BJ (cell line): ENCODE measurements at regions of chr16 and their contacts with region 1.

Region 1: DNA sequence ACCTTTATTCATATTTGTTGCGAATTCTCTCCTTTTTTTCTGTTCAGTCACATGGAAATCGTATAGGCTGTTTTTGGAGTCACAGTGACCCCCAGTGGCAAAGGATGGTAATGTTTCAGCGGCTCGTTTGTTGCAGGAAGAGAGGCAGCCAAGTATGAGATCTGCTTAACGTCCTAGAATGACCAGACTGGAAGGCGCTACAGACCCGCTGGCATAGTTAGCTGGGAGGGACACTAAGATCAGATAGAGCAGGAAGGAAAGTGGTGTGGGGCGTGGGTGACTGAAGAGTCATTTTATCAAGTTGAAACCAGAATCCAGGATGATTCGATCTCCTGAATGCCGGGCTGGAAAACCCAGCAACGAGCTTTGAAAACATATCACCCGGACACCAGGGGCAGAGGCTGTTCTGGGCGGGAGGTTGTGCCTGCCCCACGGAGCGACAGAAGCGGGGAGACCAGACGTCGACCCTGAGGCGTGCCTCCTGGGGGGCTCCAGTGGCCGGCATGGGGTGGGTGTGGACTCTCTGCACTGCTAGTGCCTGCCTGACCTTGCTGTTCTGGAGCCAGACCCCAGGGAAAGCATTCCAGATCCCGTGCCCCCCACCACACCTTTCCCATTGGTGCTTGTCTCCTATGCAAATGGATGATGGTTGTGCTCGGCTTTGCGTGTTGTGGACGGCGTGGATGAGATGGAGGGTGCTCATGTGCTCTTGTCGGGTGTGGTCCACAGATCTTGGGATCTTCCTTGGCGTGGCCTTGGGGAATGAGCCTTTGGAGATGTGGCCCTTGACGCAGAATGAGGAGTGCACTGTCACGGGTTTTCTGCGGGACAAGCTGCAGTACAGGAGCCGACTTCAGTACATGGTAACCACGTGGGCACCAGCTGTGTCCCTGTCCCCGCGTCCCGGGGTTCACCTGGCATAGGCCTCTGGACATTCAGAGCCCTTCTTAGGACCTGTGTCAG is 7.7 kb downstream of the IL34 start:
- DNase-seq: peak; percentile 48
- H3K4me3 ChIP-seq: peak overlapping the region; percentile 17; the same call in 1 of the 2 replicates
- H3K27me3 ChIP-seq: no peaks in the 10 kb centered on the region
- CTCF ChIP-seq: peak; percentile 75

Region 2: GRCh38 chr16:70331588-70332358 is 322.3 kb before region 1 on chr16:
- CTCF ChIA-PET with region 1: interaction called, 18 read pairs
- POLR2A ChIA-PET with region 1: no interaction called
- DNase-seq: no peak
- H3K4me3 ChIP-seq: no peak overlapping the region
- H3K27me3 ChIP-seq: no peaks in the 10 kb centered on the region
- CTCF ChIP-seq: peak; percentile 59

Region 3: DNA sequence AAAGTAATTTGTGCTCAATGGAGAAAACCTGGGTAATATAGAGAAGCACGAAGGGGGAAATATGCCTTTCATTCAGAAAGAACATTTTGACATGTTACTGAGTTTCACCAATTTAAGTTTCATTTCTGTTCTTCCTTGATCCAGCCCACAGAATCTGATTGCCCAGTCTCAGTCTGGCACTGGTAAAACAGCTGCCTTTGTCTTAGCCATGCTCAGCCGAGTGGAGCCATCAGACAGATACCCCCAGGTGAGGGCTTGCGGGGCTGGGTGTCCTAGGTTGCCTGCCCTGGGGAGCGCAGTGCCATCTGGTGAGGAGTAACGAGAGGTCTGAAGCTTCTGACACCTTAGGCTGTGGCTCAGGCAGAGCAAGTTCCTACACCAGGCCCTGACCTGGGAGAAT is 289.7 kb before region 1 on chr16:
- CTCF ChIA-PET with region 1: interaction called, 22 read pairs
- POLR2A ChIA-PET with region 1: no interaction called
- DNase-seq: no peak
- H3K4me3 ChIP-seq: no peak overlapping the region
- H3K27me3 ChIP-seq: no peaks in the 10 kb centered on the region
- CTCF ChIP-seq: no peak

Region 4: GRCh38 chr16:70372921-70373728 is 281.0 kb before region 1 on chr16:
- CTCF ChIA-PET with region 1: interaction called, 22 read pairs
- POLR2A ChIA-PET with region 1: no interaction called
- DNase-seq: no peak
- H3K4me3 ChIP-seq: no peak overlapping the region
- H3K27me3 ChIP-seq: no peaks in the 10 kb centered on the region
- CTCF ChIP-seq: no peak

Region 5: GRCh38 chr16:70467113-70468034 is 186.7 kb before region 1 on chr16:
- CTCF ChIA-PET with region 1: no interaction called
- POLR2A ChIA-PET with region 1: no interaction called
- DNase-seq: no peak
- H3K4me3 ChIP-seq: no peak overlapping the region
- H3K27me3 ChIP-seq: no peaks in the 10 kb centered on the region
- CTCF ChIP-seq: no peak

Region 6: GRCh38 chr16:70529051-70529777 is 124.9 kb before region 1 on chr16:
- CTCF ChIA-PET with region 1: interaction called, 14 read pairs
- POLR2A ChIA-PET with region 1: no interaction called
- DNase-seq: peak; percentile 26
- H3K4me3 ChIP-seq: no peak overlapping the region
- H3K27me3 ChIP-seq: no peaks in the 10 kb centered on the region
- CTCF ChIP-seq: peak; percentile 54

Region 7: GRCh38 chr16:70561623-70562022 is 92.5 kb before region 1 on chr16:
- CTCF ChIA-PET with region 1: interaction called, 11 read pairs
- POLR2A ChIA-PET with region 1: no interaction called
- DNase-seq: no peak
- H3K4me3 ChIP-seq: no peak overlapping the region
- H3K27me3 ChIP-seq: no peaks in the 10 kb centered on the region
- CTCF ChIP-seq: no peak

Region 8: GRCh38 chr16:70573451-70574121 is 80.5 kb before region 1 on chr16:
- CTCF ChIA-PET with region 1: interaction called, 25 read pairs
- POLR2A ChIA-PET with region 1: no interaction called
- DNase-seq: peak; percentile 75
- H3K4me3 ChIP-seq: no peak overlapping the region
- H3K27me3 ChIP-seq: no peaks in the 10 kb centered on the region
- CTCF ChIP-seq: no peak